H1 (cell line): ENCODE measurements at regions of chr4 and their contacts with region 1.

Region 1: GRCh38 chr4:70734168-70734954 is 12.6 kb downstream of the RUFY3 start:
- DNase-seq: no peak
- H3K4me3 ChIP-seq: no peak overlapping the region
- H3K27ac ChIP-seq: no peak overlapping the region
- H3K4me1 ChIP-seq: peaks cover 0 to 3% (median 0%) of the 10 kb centered on the region in 4 experiments; a peak in 1 of 7 replicates
- H3K27me3 ChIP-seq: no peaks in the 10 kb centered on the region
- CTCF ChIP-seq: no peak
- EP300 ChIP-seq: no peak
- POLR2A ChIP-seq: no peak
- RAD21 ChIP-seq: no peak

Region 2: GRCh38 chr4:70687821-70688794 is 46.3 kb before region 1 on chr4 and contains the start of gene UTP3:
- CTCF ChIA-PET with region 1: interaction called, 10 read pairs
- POLR2A ChIA-PET with region 1: no interaction called
- DNase-seq: peak; percentile 92 to 95
- H3K4me3 ChIP-seq: peak within 1 kb of the TSS; percentile 79 to 99 (median 91)
- H3K27ac ChIP-seq: peak within 1 kb of the TSS; percentile 86
- H3K4me1 ChIP-seq: peaks cover 0 to 2% (median 0%) of the 10 kb centered on the region in 4 experiments; a peak in 2 of 7 replicates
- H3K27me3 ChIP-seq: no peaks in the 10 kb centered on the region
- CTCF ChIP-seq: peak; percentile 77 to 97 (median 93)
- EP300 ChIP-seq: no peak
- POLR2A ChIP-seq: peak in 1 of 2 experiments; percentile 85; a peak in 2 of 3 replicates
- RAD21 ChIP-seq: peak; percentile 44 to 55
- total RNA-seq, gene UTP3: 50.6 and 51.3 TPM in 2 replicates

Region 3: GRCh38 chr4:70721747-70722146 is 12.6 kb before region 1 on chr4 and contains the start of gene RUFY3:
- CTCF ChIA-PET with region 1: interaction called, 32 read pairs
- POLR2A ChIA-PET with region 1: interaction called, 5 read pairs
- DNase-seq: no peak
- H3K4me3 ChIP-seq: no peak within 1 kb of the TSS
- H3K27ac ChIP-seq: no peak within 1 kb of the TSS
- H3K4me1 ChIP-seq: peaks cover 0 to 5% (median 2%) of the 10 kb centered on the region in 4 experiments; a peak in 4 of 7 replicates
- H3K27me3 ChIP-seq: no peaks in the 10 kb centered on the region
- CTCF ChIP-seq: no peak
- EP300 ChIP-seq: no peak
- POLR2A ChIP-seq: no peak
- RAD21 ChIP-seq: no peak
- total RNA-seq, gene RUFY3: 33.1 and 36.0 TPM in 2 replicates

Region 4: DNA sequence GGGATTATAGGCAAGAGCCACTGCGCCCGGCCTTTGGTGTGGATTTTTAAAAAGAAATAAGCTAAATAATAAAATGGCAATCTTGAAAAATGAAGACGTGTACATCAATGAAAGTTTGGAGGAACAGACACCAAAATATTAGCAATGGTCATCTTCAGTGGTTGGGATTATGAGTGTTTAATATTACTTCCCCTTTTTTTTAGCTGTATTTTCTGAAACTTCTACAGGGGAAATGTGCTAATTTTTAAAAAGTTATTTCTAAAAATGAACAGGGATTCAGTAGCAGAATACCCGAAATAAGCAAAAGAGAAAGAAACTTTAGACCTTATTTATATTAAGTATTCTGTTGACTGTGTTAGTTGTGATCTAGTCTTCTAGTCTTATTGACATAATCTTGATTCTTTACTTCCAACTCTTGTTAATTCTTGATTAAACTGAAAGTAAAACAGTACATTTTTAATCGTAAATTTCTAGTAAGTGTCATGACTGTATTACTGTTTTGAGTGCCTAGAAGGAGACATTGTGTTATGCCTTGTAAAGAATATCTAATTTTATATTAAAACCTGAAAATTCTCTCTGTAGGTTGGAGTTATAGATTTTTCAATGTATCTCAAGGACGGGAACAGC is 38.7 kb after region 1 on chr4:
- CTCF ChIA-PET with region 1: no interaction called
- POLR2A ChIA-PET with region 1: no interaction called
- DNase-seq: no peak
- H3K4me3 ChIP-seq: no peak overlapping the region
- H3K27ac ChIP-seq: no peak overlapping the region
- H3K4me1 ChIP-seq: no peaks in the 10 kb centered on the region
- H3K27me3 ChIP-seq: no peaks in the 10 kb centered on the region
- CTCF ChIP-seq: no peak
- EP300 ChIP-seq: no peak
- POLR2A ChIP-seq: no peak
- RAD21 ChIP-seq: no peak